Mucosa of descending colon (tissue), 3 donors: ENCODE measurements at regions of chr17 and their contacts with region 1.

Region 1: DNA sequence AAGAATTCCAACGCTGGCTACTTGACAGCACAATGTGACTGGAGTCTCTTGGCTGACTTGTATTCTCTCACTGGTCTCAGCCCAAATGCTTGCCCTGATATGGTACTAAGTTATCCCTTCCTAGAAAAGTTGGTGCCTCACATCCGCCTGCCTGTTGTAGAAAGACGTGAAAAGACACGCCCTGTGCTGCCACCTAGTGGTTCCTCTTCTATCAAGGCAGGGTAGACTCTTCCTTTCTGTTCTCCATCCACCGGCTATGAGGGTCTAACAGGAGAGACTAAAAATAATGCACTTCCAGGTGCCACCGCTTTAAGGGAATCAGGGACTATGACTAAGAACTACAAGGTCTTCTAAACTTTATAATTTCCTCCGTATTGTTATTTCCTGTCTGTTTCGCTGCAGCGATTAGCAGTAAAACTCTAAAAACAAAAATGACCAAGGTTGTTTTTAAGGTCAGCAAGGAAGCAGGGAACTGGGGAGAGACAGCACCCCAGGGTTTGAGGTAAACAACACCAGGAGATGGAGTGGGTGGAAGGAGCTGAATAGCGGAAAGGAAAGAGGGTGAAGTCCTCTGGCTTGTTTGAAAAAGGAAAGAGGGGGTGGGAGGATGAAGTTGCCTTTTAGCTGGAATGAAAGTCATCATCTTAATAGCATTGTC is 109.5 kb downstream of the YPEL2 start:
- DNase-seq: peak; percentile 64 to 100 (median 74)
- ATAC-seq: peak; percentile 98
- H3K4me3 ChIP-seq: no peak overlapping the region
- H3K4me1 ChIP-seq: no peaks in the 10 kb centered on the region
- CTCF ChIP-seq: peak; percentile 75

Region 2: GRCh38 chr17:59311130-59311920 is 129.6 kb before region 1 on chr17:
- intact Hi-C with region 1: loop called (anchors 1 to 2 kb)
- DNase-seq: peak in 1 of 3 donors; percentile 72
- ATAC-seq: peak; percentile 97
- H3K4me3 ChIP-seq: no peak overlapping the region
- H3K4me1 ChIP-seq: peaks cover 6% of the 10 kb centered on the region
- CTCF ChIP-seq: peak; percentile 70

Region 3: GRCh38 chr17:59329638-59330313 is 111.1 kb before region 1 on chr17:
- intact Hi-C with region 1: loop called (anchors 5 kb)
- DNase-seq: peak; percentile 56 to 58 (median 57)
- ATAC-seq: peak; percentile 50
- H3K4me3 ChIP-seq: no peak overlapping the region
- H3K4me1 ChIP-seq: peaks cover 30% of the 10 kb centered on the region
- CTCF ChIP-seq: peak; percentile 57

Region 4: DNA sequence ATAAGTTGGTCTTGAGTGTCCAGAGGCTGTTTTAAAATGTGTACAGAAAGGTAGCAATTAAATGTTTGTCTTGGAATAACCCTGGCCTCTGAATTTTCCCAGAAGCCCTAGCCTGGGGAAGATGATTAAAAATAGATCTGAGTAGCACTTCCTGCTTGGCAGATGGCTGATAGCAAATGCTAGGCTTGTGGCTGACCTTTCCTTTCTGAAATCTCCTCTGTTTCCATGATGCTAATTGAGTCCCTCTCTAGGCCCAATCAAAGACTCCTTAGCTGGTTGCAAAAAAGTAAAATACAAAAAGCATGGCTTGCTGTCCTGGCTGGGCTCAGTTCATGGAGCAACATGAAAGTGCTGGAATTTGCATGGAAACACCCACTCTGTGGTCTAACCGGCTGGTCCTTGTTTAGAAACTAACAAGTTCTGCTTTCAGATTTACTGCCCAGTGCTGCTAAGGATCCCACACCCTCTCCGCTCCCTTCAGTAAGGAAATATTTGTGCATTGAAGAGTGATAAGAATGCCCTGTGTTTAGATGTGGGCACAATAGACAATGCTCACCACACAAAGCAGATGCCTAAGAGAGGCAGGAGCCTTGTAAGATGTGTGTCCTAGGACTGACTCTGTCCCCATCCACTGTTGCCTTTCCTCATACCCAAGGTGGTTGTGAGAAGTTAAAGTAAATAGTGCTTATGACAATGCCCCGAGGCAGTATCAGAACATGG is 68.6 kb before region 1 on chr17:
- intact Hi-C with region 1: no loop called
- DNase-seq: peak in 1 of 3 donors; percentile 75
- ATAC-seq: peak; percentile 83
- H3K4me3 ChIP-seq: no peak overlapping the region
- H3K4me1 ChIP-seq: peaks cover 69% of the 10 kb centered on the region
- CTCF ChIP-seq: no peak